CD8-positive, alpha-beta T cell (primary cell): ENCODE measurements at regions of chr20 and their contacts with region 1.

Region 1: GRCh38 chr20:46939031-46939965 is 44.7 kb downstream of the EYA2 start:
- DNase-seq: no peak
- ATAC-seq: no peak
- H3K4me3 ChIP-seq: no peak overlapping the region
- H3K4me3 Mint-ChIP-seq: no peak overlapping the region
- H3K27ac ChIP-seq: no peak overlapping the region
- H3K27ac Mint-ChIP-seq: no peak overlapping the region
- H3K4me1 ChIP-seq: no peaks in the 10 kb centered on the region
- H3K4me1 Mint-ChIP-seq: no peaks in the 10 kb centered on the region
- H3K27me3 ChIP-seq: no peaks in the 10 kb centered on the region
- H3K27me3 Mint-ChIP-seq: peaks cover 13% of the 10 kb centered on the region
- CTCF ChIP-seq: no peak

Region 2: GRCh38 chr20:46814366-46815242 is 124.7 kb before region 1 on chr20:
- CTCF ChIA-PET with region 1: no interaction called
- POLR2A ChIA-PET with region 1: no interaction called
- intact Hi-C with region 1: no loop called
- DNase-seq: no peak
- ATAC-seq: no peak
- H3K4me3 ChIP-seq: no peak overlapping the region
- H3K4me3 Mint-ChIP-seq: no peak overlapping the region
- H3K27ac ChIP-seq: no peak overlapping the region
- H3K27ac Mint-ChIP-seq: no peak overlapping the region
- H3K4me1 ChIP-seq: no peaks in the 10 kb centered on the region
- H3K4me1 Mint-ChIP-seq: no peaks in the 10 kb centered on the region
- H3K27me3 ChIP-seq: no peaks in the 10 kb centered on the region
- H3K27me3 Mint-ChIP-seq: peaks cover 38% of the 10 kb centered on the region
- CTCF ChIP-seq: no peak

Region 3: GRCh38 chr20:46914789-46915379 is 24.4 kb before region 1 on chr20:
- CTCF ChIA-PET with region 1: no interaction called
- POLR2A ChIA-PET with region 1: no interaction called
- intact Hi-C with region 1: loop called in 1 of 2 experiments (anchors 1 kb)
- DNase-seq: no peak
- ATAC-seq: no peak
- H3K4me3 ChIP-seq: no peak overlapping the region
- H3K4me3 Mint-ChIP-seq: no peak overlapping the region
- H3K27ac ChIP-seq: no peak overlapping the region
- H3K27ac Mint-ChIP-seq: no peak overlapping the region
- H3K4me1 ChIP-seq: no peaks in the 10 kb centered on the region
- H3K4me1 Mint-ChIP-seq: no peaks in the 10 kb centered on the region
- H3K27me3 ChIP-seq: no peaks in the 10 kb centered on the region
- H3K27me3 Mint-ChIP-seq: peaks cover 9% of the 10 kb centered on the region
- CTCF ChIP-seq: no peak